Activated CD4-positive, alpha-beta T cell treated with anti-CD3 and anti-CD28 coated beads for 36 hours (primary cell): ENCODE measurements at regions of chr10 and their contacts with region 1.

Region 1: GRCh38 chr10:71569775-71570588 is 149.6 kb downstream of the C10orf105 start:
- DNase-seq: peak; percentile 89
- ATAC-seq: peak; percentile 69
- H3K4me3 Mint-ChIP-seq: no peak overlapping the region
- H3K27ac Mint-ChIP-seq: no peak overlapping the region
- H3K4me1 Mint-ChIP-seq: no peaks in the 10 kb centered on the region
- H3K27me3 Mint-ChIP-seq: no peaks in the 10 kb centered on the region

Region 2: DNA sequence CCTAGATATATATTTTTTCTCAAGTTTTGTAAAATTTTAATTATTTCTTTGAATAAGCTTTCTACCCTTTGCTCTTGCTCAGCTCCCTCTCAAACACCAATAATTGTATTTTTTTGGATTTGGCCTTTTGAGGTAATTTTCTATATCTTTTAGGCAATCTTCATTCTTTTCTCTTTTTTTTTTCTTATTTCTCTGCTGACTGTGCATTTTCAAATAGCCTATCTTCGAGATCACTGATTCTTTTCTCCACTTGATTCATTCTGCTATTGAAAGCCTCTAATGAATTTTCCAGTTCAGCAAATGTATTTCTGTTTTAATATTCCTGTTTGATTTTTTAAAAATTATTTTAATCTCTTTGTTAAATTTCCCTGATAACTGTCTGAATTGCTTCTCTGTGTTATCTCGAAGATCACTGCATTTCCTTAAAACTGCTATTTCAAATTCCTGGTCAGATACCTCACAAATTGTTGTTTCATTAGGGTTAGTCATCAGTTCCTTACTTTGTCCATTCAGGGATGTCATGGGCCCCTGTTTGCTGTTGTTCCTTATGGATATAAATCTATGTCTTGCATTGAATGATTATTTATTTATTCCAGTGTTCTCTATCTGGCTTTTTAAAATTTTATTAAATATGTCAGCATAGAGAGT is 457.7 kb before region 1 on chr10:
- CTCF ChIA-PET with region 1: no interaction called
- POLR2A ChIA-PET with region 1: no interaction called
- intact Hi-C with region 1: no loop called
- DNase-seq: no peak
- ATAC-seq: no peak
- H3K4me3 Mint-ChIP-seq: no peak overlapping the region
- H3K27ac Mint-ChIP-seq: no peak overlapping the region
- H3K4me1 Mint-ChIP-seq: no peaks in the 10 kb centered on the region
- H3K27me3 Mint-ChIP-seq: peaks cover 26% of the 10 kb centered on the region

Region 3: GRCh38 chr10:71314028-71314693 is 255.8 kb before region 1 on chr10:
- CTCF ChIA-PET with region 1: interaction called, 21 read pairs
- POLR2A ChIA-PET with region 1: no interaction called
- intact Hi-C with region 1: loop called (anchors 1 kb)
- DNase-seq: peak; percentile 71
- ATAC-seq: peak; percentile 24
- H3K4me3 Mint-ChIP-seq: no peak overlapping the region
- H3K27ac Mint-ChIP-seq: no peak overlapping the region
- H3K4me1 Mint-ChIP-seq: peaks cover 18% of the 10 kb centered on the region
- H3K27me3 Mint-ChIP-seq: peaks cover 7% of the 10 kb centered on the region

Region 4: DNA sequence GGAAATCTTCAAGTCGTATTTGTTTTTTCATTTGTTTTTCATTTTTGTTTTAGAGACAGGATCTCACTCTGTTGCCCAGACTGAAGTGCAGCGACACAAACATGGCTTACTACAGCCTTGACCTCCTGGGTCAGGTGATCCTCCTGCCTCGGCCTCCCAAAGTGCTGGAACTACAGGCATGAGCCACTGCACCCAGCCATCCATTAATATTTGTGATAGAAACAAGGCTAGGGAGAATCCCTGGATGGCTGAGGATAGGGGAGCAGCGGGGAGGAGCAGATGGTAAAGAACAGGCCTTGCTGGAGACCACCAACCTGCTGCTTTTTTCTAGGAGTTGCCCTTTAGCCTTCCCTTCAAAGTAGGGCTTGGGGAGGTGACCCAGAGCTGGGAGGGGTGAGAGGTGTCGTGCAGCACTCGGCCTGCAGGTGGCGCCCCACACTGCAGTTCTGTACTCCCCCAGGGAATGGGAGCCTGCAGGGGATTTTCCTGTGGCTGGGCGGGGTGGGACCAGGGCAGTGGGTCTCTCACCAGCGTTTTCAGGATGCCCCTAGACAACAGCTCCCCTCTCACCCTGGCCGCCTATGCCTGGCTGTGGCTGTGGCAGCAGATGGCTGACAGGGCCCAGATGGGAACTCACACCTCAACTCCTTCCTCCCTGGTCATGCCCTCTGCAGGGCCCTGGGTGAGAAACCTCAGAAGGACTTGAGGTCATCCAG is 185.9 kb before region 1 on chr10:
- CTCF ChIA-PET with region 1: interaction called, 8 read pairs
- POLR2A ChIA-PET with region 1: no interaction called
- intact Hi-C with region 1: loop called (anchors 1 kb)
- DNase-seq: peak; percentile 87
- ATAC-seq: peak; percentile 95
- H3K4me3 Mint-ChIP-seq: no peak overlapping the region
- H3K27ac Mint-ChIP-seq: no peak overlapping the region
- H3K4me1 Mint-ChIP-seq: no peaks in the 10 kb centered on the region
- H3K27me3 Mint-ChIP-seq: no peaks in the 10 kb centered on the region

Region 5: GRCh38 chr10:71486484-71487114 is 83.4 kb before region 1 on chr10:
- CTCF ChIA-PET with region 1: interaction called, 21 read pairs
- POLR2A ChIA-PET with region 1: no interaction called
- intact Hi-C with region 1: loop called (anchors 1 kb)
- DNase-seq: peak; percentile 81
- ATAC-seq: peak; percentile 64
- H3K4me3 Mint-ChIP-seq: no peak overlapping the region
- H3K27ac Mint-ChIP-seq: no peak overlapping the region
- H3K4me1 Mint-ChIP-seq: no peaks in the 10 kb centered on the region
- H3K27me3 Mint-ChIP-seq: peaks cover 4% of the 10 kb centered on the region

Region 6: GRCh38 chr10:71554671-71555070 is 15.3 kb before region 1 on chr10:
- CTCF ChIA-PET with region 1: interaction called, 21 read pairs
- POLR2A ChIA-PET with region 1: no interaction called
- intact Hi-C with region 1: no loop called
- DNase-seq: no peak
- ATAC-seq: peak; percentile 36
- H3K4me3 Mint-ChIP-seq: no peak overlapping the region
- H3K27ac Mint-ChIP-seq: no peak overlapping the region
- H3K4me1 Mint-ChIP-seq: peaks cover 4% of the 10 kb centered on the region
- H3K27me3 Mint-ChIP-seq: peaks cover 8% of the 10 kb centered on the region